ENCODE measurements at regions of chr9 and their contacts with region 1.

Region 1: GRCh38 chr9:101458955-101459631 is 23.5 kb upstream of the ALDOB start:
- DNase-seq: peak; percentile 20
- ATAC-seq: peak; percentile 87
- H3K4me3 Mint-ChIP-seq: no peak overlapping the region
- H3K27ac Mint-ChIP-seq: no peak overlapping the region
- H3K4me1 Mint-ChIP-seq: no peaks in the 10 kb centered on the region
- H3K27me3 Mint-ChIP-seq: peaks cover 14% of the 10 kb centered on the region
- CTCF ChIP-seq: peak; percentile 62

Region 2: DNA sequence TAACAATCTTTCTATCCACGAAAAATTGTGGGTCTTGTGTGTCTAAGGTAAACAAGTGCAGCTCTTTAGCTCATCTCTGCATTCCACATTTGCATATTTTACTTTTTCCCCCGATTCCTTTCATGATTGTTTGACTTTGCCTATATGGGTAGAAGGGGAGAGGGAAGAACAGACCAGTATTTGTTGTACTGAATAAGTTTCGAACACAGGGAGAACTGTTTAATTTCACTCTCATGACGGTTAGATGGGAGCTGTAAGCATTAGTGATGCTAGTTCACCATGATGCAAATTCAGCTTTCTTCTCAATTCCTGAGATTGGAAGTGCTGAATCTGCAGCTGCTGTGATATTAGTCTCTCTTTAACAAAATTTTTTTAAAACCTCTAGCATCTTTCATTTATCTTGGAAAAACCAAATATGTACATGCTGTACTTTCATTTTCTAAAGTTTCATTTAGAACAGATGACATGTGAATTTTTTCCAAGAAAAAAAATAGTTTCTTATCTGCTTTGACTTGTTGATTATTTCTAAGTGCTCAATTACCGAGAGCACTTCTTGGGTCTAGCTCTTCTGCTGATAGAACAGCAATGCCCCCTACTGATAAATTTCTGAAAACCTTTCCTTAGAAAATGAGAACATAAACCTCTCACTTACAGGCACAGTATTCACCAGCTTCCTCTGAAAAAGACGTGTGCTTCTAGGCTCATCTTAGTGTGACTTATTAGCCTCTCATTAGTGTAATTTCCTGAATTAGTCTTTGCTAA is 223.8 kb before region 1 on chr9:
- CTCF ChIA-PET with region 1: no interaction called
- POLR2A ChIA-PET with region 1: no interaction called
- intact Hi-C with region 1: no loop called
- DNase-seq: no peak
- ATAC-seq: no peak
- H3K4me3 Mint-ChIP-seq: no peak overlapping the region
- H3K27ac Mint-ChIP-seq: no peak overlapping the region
- H3K4me1 Mint-ChIP-seq: no peaks in the 10 kb centered on the region
- H3K27me3 Mint-ChIP-seq: peaks cover 10% of the 10 kb centered on the region
- CTCF ChIP-seq: peak; percentile 44

Region 3: GRCh38 chr9:101481300-101481699 is 22.2 kb after region 1 on chr9:
- CTCF ChIA-PET with region 1: interaction called, 10 read pairs
- POLR2A ChIA-PET with region 1: no interaction called
- intact Hi-C with region 1: no loop called
- DNase-seq: no peak
- ATAC-seq: no peak
- H3K4me3 Mint-ChIP-seq: no peak overlapping the region
- H3K27ac Mint-ChIP-seq: no peak overlapping the region
- H3K4me1 Mint-ChIP-seq: no peaks in the 10 kb centered on the region
- H3K27me3 Mint-ChIP-seq: peaks cover 35% of the 10 kb centered on the region
- CTCF ChIP-seq: no peak

Region 4: GRCh38 chr9:101530077-101530711 is 71.1 kb after region 1 on chr9:
- CTCF ChIA-PET with region 1: interaction called, 49 read pairs
- POLR2A ChIA-PET with region 1: interaction called, 3 read pairs
- intact Hi-C with region 1: loop called (anchors 1 kb)
- DNase-seq: peak; percentile 80
- ATAC-seq: peak; percentile 43
- H3K4me3 Mint-ChIP-seq: no peak overlapping the region
- H3K27ac Mint-ChIP-seq: no peak overlapping the region
- H3K4me1 Mint-ChIP-seq: peaks cover 1% of the 10 kb centered on the region
- H3K27me3 Mint-ChIP-seq: peaks cover 6% of the 10 kb centered on the region
- CTCF ChIP-seq: peak; percentile 85

Region 5: DNA sequence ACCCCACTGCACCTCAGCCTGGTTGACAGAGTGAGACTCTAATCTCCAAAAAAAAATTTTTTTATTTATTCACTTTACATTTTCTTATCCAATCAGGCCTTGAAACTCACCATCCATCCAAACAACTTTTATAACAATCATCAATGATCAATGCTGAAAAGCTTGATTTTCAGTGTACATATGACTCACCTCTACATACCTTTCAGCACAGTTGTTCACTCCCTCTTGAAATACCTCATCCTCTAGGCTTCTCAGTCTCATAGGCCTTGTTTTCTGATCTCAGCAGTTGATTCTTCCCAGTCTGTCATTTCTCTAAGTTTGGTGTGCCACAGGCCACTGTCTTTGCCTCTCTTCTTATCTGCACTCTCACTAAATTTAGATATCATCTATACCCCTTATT is 243.2 kb after region 1 on chr9:
- CTCF ChIA-PET with region 1: no interaction called
- POLR2A ChIA-PET with region 1: no interaction called
- intact Hi-C with region 1: no loop called
- DNase-seq: no peak
- ATAC-seq: no peak
- H3K4me3 Mint-ChIP-seq: no peak overlapping the region
- H3K27ac Mint-ChIP-seq: no peak overlapping the region
- H3K4me1 Mint-ChIP-seq: peaks cover 11% of the 10 kb centered on the region
- H3K27me3 Mint-ChIP-seq: peaks cover 9% of the 10 kb centered on the region
- CTCF ChIP-seq: no peak